Esophagus muscularis mucosa (tissue), 4 donors: ENCODE measurements at regions of chr21 and their contacts with region 1.

Region 1: GRCh38 chr21:26842976-26843932 is 2.0 kb downstream of the ADAMTS1 start:
- DNase-seq: peak; percentile 98
- H3K4me3 ChIP-seq: peak overlapping the region; percentile 70 to 85 (median 78)
- H3K27ac ChIP-seq: peak overlapping the region; percentile 94 to 97 (median 96)
- H3K4me1 ChIP-seq: peaks cover 34 to 56% (median 52%) of the 10 kb centered on the region in 4 donors
- H3K27me3 ChIP-seq: no peaks in the 10 kb centered on the region
- CTCF ChIP-seq: peak; percentile 26 to 38 (median 28)
- EP300 ChIP-seq: no peak
- POLR2A ChIP-seq: peak; percentile 5

Region 2: GRCh38 chr21:26769613-26770188 is 73.6 kb before region 1 on chr21:
- intact Hi-C with region 1: loop called (anchors 5 kb)
- DNase-seq: no peak
- H3K4me3 ChIP-seq: no peak overlapping the region
- H3K27ac ChIP-seq: no peak overlapping the region
- H3K4me1 ChIP-seq: no peaks in the 10 kb centered on the region
- H3K27me3 ChIP-seq: no peaks in the 10 kb centered on the region
- CTCF ChIP-seq: peak; percentile 61 to 71 (median 70)
- EP300 ChIP-seq: no peak
- POLR2A ChIP-seq: no peak

Region 3: DNA sequence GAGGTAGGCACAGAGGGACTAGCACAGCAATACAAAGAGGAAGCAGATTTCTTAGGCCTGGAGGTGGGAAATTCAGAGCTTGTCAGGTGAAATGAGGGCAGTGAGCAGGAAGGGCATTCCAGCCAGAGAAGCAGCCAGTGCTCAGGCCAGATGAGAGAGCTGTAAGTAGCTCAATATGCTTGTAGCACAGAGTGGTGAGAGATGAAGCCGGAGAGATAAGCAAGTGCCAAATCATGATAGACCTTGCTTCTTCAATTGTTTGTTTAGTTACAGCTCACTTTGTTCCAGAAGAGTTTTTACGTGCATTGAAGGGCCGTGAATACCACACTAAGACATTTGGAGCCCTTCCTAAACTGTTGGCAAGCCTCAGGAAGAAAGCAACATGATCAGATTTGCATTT is 44.0 kb after region 1 on chr21:
- intact Hi-C with region 1: no loop called
- DNase-seq: no peak
- H3K4me3 ChIP-seq: no peak overlapping the region
- H3K27ac ChIP-seq: no peak overlapping the region
- H3K4me1 ChIP-seq: peaks cover 0 to 14% (median 11%) of the 10 kb centered on the region in 4 donors
- H3K27me3 ChIP-seq: no peaks in the 10 kb centered on the region
- CTCF ChIP-seq: no peak
- EP300 ChIP-seq: no peak
- POLR2A ChIP-seq: no peak

Region 4: GRCh38 chr21:27700974-27701614 is 857.8 kb after region 1 on chr21:
- intact Hi-C with region 1: loop called (anchors 2 kb)
- DNase-seq: no peak
- H3K4me3 ChIP-seq: no peak overlapping the region
- H3K27ac ChIP-seq: no peak overlapping the region
- H3K4me1 ChIP-seq: peaks cover 0 to 27% (median 4%) of the 10 kb centered on the region in 4 donors
- H3K27me3 ChIP-seq: no peaks in the 10 kb centered on the region
- CTCF ChIP-seq: peak; percentile 81 to 93 (median 93)
- EP300 ChIP-seq: no peak
- POLR2A ChIP-seq: no peak